Dendritic cell treated with granulocyte-macrophage colony-stimulating factor and Interleukin-4, amounts not matched to agents 40 ng/mL and 50 ng/mL, for 4 days (primary cell): ENCODE measurements at regions of chr5 and their contacts with region 1.

Region 1: DNA sequence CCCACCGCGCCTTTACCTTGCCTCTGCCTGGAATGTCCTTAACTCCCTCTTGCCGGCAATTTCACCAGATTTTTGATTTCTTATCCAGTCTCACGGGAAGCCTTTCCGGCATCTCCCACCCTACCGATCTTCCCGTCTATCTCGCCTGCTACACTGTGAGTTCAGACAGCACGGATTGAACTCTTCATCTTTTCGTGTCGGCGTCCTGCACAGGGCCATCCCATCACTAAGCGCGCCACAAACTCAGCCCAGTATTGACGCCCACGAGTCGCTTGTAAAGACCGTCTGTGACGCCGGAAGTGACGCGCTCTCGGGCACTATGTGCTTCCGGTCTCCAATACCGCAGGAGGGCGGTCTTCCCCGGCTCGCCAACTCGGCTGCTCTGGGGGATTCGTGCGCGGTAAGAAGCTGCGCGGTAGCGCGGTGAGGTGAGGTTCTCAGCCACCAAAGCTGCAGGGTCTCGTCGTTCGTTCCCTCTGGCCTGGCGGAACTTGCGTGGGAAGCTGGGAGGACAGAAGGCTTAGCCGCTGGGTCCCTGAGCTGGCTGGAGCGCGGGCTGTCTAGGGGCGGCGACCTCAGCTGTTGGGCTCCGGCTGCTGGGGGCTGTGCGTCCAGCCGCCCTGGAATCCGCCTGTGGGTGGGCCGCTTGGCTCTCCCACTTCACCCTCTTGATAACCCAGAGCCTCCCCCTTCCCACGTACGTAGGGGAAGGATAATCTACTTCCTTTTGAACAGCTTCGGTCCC is at the start of gene ZCCHC9:
- H3K4me3 Mint-ChIP-seq: peak within 1 kb of the TSS; percentile 89
- H3K27ac Mint-ChIP-seq: peak within 1 kb of the TSS; percentile 88
- H3K4me1 Mint-ChIP-seq: peaks cover 35% of the 10 kb centered on the region
- H3K27me3 Mint-ChIP-seq: no peaks in the 10 kb centered on the region

Region 2: GRCh38 chr5:82278095-82278918 is 976.9 kb after region 1 on chr5 and contains the start of gene RPS23:
- intact Hi-C with region 1: loop called (anchors 5 kb)
- H3K4me3 Mint-ChIP-seq: peak within 1 kb of the TSS; percentile 90
- H3K27ac Mint-ChIP-seq: peak within 1 kb of the TSS; percentile 99
- H3K4me1 Mint-ChIP-seq: peaks cover 28% of the 10 kb centered on the region
- H3K27me3 Mint-ChIP-seq: no peaks in the 10 kb centered on the region